ENCODE measurements at regions of chr9 and their contacts with region 1.

Region 1: DNA sequence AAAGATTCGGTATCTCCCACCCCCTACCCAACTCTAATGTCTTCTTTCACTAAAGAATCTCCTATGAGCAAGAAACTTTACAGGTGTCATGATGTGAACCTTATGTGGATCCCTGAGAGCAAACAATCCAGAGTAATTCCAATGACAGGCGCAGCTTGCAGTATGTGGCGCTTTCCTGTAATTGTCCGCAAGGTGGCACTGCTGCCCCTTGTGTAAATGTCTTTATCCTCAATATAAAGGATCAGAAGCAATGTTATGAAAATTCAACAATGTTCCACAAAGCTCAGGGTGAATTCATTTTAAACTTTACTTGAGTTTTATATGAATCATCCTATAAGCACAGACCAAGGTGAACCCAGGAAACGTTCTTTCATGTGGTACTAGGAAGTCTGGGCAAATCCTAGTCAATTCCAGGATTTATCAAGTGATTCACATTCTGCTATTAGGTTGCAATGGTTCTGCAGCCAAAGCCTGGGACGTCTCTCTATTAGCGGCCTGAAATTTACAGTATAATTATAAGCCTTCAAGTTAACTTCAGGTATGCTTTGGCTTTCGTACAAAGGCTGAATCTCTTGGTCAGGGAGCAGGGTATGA is 113.7 kb downstream of the TRPM6 start:
- DNase-seq: peak; percentile 65
- ATAC-seq: peak in 7 of 8 donors; percentile 40 to 83 (median 74)
- H3K4me3 ChIP-seq: no peak overlapping the region
- H3K27ac ChIP-seq: no peak overlapping the region
- H3K4me1 ChIP-seq: peaks cover 0 to 9% (median 0%) of the 10 kb centered on the region in 9 donors
- H3K27me3 ChIP-seq: peaks cover 0 to 23% (median 0%) of the 10 kb centered on the region in 7 donors
- CTCF ChIP-seq: peak; percentile 76 to 97 (median 93)

Region 2: GRCh38 chr9:74333384-74334032 is 440.5 kb before region 1 on chr9:
- intact Hi-C with region 1: no loop called
- DNase-seq: no peak
- ATAC-seq: no peak
- H3K4me3 ChIP-seq: no peak overlapping the region
- H3K27ac ChIP-seq: no peak overlapping the region
- H3K4me1 ChIP-seq: no peaks in the 10 kb centered on the region
- H3K27me3 ChIP-seq: peaks cover 0 to 6% (median 0%) of the 10 kb centered on the region in 7 donors
- CTCF ChIP-seq: no peak

Region 3: GRCh38 chr9:74848153-74848525 is 74.2 kb after region 1 on chr9:
- intact Hi-C with region 1: no loop called
- DNase-seq: no peak
- ATAC-seq: no peak
- H3K4me3 ChIP-seq: no peak overlapping the region
- H3K27ac ChIP-seq: no peak overlapping the region
- H3K4me1 ChIP-seq: no peaks in the 10 kb centered on the region
- H3K27me3 ChIP-seq: no peaks in the 10 kb centered on the region
- CTCF ChIP-seq: no peak

Region 4: GRCh38 chr9:74940600-74940999 is 166.6 kb after region 1 on chr9:
- intact Hi-C with region 1: loop called in 1 of 10 experiments (anchors 5 kb)
- DNase-seq: no peak
- ATAC-seq: peak in 2 of 8 donors; percentile 47 to 66
- H3K4me3 ChIP-seq: no peak overlapping the region
- H3K27ac ChIP-seq: no peak overlapping the region
- H3K4me1 ChIP-seq: no peaks in the 10 kb centered on the region
- H3K27me3 ChIP-seq: no peaks in the 10 kb centered on the region
- CTCF ChIP-seq: peak in 5 of 9 donors; percentile 11 to 43 (median 27)

Region 5: GRCh38 chr9:74952281-74953151 is 178.5 kb after region 1 on chr9 and contains the start of gene C9orf40:
- intact Hi-C with region 1: loop called in 3 of 10 experiments (anchors 2 to 5 kb)
- DNase-seq: peak; percentile 91 to 93
- ATAC-seq: peak; percentile 95 to 99 (median 98)
- H3K4me3 ChIP-seq: peak within 1 kb of the TSS; percentile 60 to 98 (median 88)
- H3K27ac ChIP-seq: peak within 1 kb of the TSS; percentile 85 to 99 (median 96)
- H3K4me1 ChIP-seq: peaks cover 0 to 27% (median 17%) of the 10 kb centered on the region in 9 donors
- H3K27me3 ChIP-seq: no peaks in the 10 kb centered on the region
- CTCF ChIP-seq: peak; percentile 76 to 92 (median 86)
- total RNA-seq, gene C9orf40: 0.96 to 2.9 (median 1.9) TPM

Region 6: DNA sequence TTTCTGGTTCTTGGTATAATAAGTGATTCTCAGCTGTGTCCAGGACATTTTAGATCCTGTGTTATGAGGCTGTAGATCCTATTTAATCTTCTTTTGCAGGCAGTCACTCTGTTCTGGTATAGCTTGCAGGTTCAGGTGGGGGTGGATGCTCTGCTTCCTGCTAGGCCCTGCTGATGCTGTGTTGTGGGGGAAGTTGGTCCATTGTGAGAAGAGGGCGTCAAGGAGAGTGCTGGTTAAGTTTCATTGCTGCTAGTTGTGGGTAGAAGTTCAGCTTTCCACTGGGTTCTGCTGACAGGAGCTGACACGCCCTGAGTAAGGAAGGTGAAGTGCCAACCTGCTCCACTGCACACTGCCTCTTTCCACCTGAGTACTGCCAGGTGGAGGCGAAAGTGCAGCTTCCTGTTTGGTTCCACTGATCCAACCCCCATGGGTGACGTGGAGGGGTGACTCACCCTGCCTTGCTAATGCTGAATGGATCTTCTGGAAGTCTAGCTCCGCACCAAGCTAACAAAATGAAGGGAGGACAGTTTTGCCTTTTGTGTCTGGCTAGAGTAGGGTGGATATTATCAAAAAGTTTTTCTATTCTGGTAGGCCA is 297.6 kb after region 1 on chr9:
- intact Hi-C with region 1: loop called in 7 of 10 experiments (anchors 2 to 10 kb)
- DNase-seq: no peak
- ATAC-seq: peak in 1 of 8 donors; percentile 15
- H3K4me3 ChIP-seq: no peak overlapping the region
- H3K27ac ChIP-seq: no peak overlapping the region
- H3K4me1 ChIP-seq: no peaks in the 10 kb centered on the region
- H3K27me3 ChIP-seq: no peaks in the 10 kb centered on the region
- CTCF ChIP-seq: no peak

Measured in heart right ventricle (tissue), 16 donors.